ENCODE measurements at regions of chr19 and their contacts with region 1.

Region 1: DNA sequence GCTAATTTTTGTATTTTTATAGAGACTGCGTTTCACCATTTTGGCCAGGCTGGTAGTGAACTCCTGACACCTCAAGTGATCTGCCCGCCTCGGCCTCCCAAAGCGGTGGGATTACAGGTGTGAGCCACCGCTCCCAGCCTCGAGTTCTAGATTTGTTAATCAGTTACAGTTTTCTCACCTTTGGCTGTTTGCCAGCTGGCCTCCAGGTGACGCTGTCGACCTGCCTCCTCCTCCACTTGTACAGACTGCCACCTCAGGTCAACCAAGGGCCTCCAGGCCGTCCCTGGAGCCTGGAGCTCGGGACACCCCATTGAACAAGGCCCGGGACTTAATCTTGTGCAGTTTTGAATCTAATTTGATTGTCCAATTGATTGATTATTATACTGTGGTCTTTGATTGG is 45.5 kb downstream of the IER2 start:
- DNase-seq: no peak
- H3K4me3 ChIP-seq: no peak overlapping the region
- H3K27ac ChIP-seq: no peak overlapping the region
- H3K4me1 ChIP-seq: no peaks in the 10 kb centered on the region
- H3K27me3 ChIP-seq: no peaks in the 10 kb centered on the region
- CTCF ChIP-seq: no peak

Region 2: DNA sequence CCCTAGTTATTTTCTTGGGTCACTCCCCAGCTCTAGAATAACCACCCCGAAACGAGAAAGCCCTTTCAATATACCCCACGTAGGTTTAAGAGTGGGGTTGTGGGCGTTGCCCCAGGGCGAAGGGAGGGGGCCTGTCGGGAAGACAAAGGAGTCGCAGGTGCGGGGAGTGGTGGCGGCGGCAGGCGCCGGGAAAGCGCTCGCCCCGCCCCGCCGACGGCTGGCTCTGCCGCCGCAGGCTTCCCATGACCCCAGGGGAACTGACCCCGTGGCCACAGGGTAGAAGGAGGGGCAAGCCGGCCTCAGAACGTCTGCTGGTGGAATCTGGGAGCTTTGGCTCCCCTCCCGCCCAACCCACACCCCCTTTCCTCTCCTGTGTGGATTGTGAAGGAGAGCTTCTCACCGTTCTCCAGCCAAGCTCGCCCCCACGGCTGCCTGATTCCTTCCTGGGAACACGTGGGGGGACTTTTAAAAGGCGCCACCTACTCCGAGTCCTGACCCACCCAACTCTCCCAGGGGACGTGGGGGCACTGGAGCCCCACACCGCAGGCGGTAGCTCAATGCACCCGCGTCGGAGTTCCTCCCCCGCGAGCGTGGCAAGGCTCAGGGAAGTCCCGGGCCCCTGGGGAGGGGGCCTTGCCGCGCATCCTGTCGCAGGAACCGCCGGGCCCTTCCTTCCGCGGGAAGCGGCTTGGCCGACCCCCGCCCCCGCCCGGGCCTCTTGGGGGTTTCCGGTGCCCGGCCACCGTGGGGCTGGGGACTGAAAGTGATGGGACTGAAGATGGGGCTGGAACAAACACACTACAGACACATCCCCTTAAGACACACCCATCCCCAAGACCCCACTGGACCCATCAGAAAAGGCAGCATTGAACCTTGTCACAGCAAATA is 40.0 kb before region 1 on chr19:
- CTCF ChIA-PET with region 1: no interaction called
- dilution Hi-C with region 1: no loop called
- in situ Hi-C with region 1: no loop called
- intact Hi-C with region 1: loop called (anchors 1 kb)
- DNase-seq: peak; percentile 65
- H3K4me3 ChIP-seq: peak overlapping the region; percentile 70 to 88 (median 86)
- H3K27ac ChIP-seq: peak overlapping the region; percentile 95
- H3K4me1 ChIP-seq: peaks cover 21% of the 10 kb centered on the region
- H3K27me3 ChIP-seq: no peaks in the 10 kb centered on the region
- CTCF ChIP-seq: no peak

Region 3: GRCh38 chr19:13162518-13163314 is 33.0 kb before region 1 on chr19:
- CTCF ChIA-PET with region 1: interaction called, 4 read pairs
- dilution Hi-C with region 1: no loop called
- in situ Hi-C with region 1: no loop called
- intact Hi-C with region 1: loop called (anchors 2 kb)
- DNase-seq: peak; percentile 97
- H3K4me3 ChIP-seq: peak overlapping the region; percentile 3 to 36 (median 33)
- H3K27ac ChIP-seq: peak overlapping the region; percentile 82
- H3K4me1 ChIP-seq: peaks cover 51% of the 10 kb centered on the region
- H3K27me3 ChIP-seq: no peaks in the 10 kb centered on the region
- CTCF ChIP-seq: no peak